Sigmoid colon (tissue), 7 donors: ENCODE measurements at regions of chrX and their contacts with region 1.

Region 1: GRCh38 chrX:150898343-150899190 is at the start of gene CD99L2:
- DNase-seq: peak; percentile 92
- H3K4me3 ChIP-seq: peak within 1 kb of the TSS; percentile 44 to 73 (median 70)
- H3K27ac ChIP-seq: peak within 1 kb of the TSS; percentile 71 to 86 (median 77)
- H3K4me1 ChIP-seq: peaks cover 0 to 7% (median 0%) of the 10 kb centered on the region in 4 donors
- H3K27me3 ChIP-seq: no peaks in the 10 kb centered on the region
- CTCF ChIP-seq: no peak
- EP300 ChIP-seq: no peak
- POLR2A ChIP-seq: no peak
- total RNA-seq, gene CD99L2: 55.8 to 62.6 (median 59.5) TPM

Region 2: GRCh38 chrX:150934453-150934852 is 35.9 kb after region 1 on chrX:
- intact Hi-C with region 1: loop called (anchors 2 kb)
- DNase-seq: peak; percentile 71
- H3K4me3 ChIP-seq: no peak overlapping the region
- H3K27ac ChIP-seq: peak overlapping the region in 3 of 4 donors; percentile 35 to 67 (median 63)
- H3K4me1 ChIP-seq: peaks cover 0 to 9% (median 3%) of the 10 kb centered on the region in 4 donors
- H3K27me3 ChIP-seq: no peaks in the 10 kb centered on the region
- CTCF ChIP-seq: no peak
- EP300 ChIP-seq: no peak
- POLR2A ChIP-seq: no peak

Region 3: GRCh38 chrX:150982788-150983520 is 84.4 kb after region 1 on chrX and contains the start of gene HMGB3:
- intact Hi-C with region 1: loop called (anchors 1 kb)
- DNase-seq: peak; percentile 86
- H3K4me3 ChIP-seq: peak within 1 kb of the TSS; percentile 23 to 57 (median 51)
- H3K27ac ChIP-seq: peak within 1 kb of the TSS; percentile 49 to 62 (median 56)
- H3K4me1 ChIP-seq: no peaks in the 10 kb centered on the region
- H3K27me3 ChIP-seq: no peaks in the 10 kb centered on the region
- CTCF ChIP-seq: no peak
- EP300 ChIP-seq: no peak
- POLR2A ChIP-seq: no peak
- total RNA-seq, gene HMGB3: 2.5 to 3.9 (median 2.7) TPM

Region 4: GRCh38 chrX:151082076-151082948 is 183.7 kb after region 1 on chrX:
- intact Hi-C with region 1: loop called (anchors 10 kb)
- DNase-seq: peak; percentile 72
- H3K4me3 ChIP-seq: peak overlapping the region in 2 of 4 donors; percentile 10 to 12
- H3K27ac ChIP-seq: no peak overlapping the region
- H3K4me1 ChIP-seq: peaks cover 0 to 6% (median 0%) of the 10 kb centered on the region in 4 donors
- H3K27me3 ChIP-seq: no peaks in the 10 kb centered on the region
- CTCF ChIP-seq: peak; percentile 57 to 88 (median 80)
- EP300 ChIP-seq: no peak
- POLR2A ChIP-seq: no peak